ENCODE measurements at regions of chr1 and their contacts with region 1.

Region 1: DNA sequence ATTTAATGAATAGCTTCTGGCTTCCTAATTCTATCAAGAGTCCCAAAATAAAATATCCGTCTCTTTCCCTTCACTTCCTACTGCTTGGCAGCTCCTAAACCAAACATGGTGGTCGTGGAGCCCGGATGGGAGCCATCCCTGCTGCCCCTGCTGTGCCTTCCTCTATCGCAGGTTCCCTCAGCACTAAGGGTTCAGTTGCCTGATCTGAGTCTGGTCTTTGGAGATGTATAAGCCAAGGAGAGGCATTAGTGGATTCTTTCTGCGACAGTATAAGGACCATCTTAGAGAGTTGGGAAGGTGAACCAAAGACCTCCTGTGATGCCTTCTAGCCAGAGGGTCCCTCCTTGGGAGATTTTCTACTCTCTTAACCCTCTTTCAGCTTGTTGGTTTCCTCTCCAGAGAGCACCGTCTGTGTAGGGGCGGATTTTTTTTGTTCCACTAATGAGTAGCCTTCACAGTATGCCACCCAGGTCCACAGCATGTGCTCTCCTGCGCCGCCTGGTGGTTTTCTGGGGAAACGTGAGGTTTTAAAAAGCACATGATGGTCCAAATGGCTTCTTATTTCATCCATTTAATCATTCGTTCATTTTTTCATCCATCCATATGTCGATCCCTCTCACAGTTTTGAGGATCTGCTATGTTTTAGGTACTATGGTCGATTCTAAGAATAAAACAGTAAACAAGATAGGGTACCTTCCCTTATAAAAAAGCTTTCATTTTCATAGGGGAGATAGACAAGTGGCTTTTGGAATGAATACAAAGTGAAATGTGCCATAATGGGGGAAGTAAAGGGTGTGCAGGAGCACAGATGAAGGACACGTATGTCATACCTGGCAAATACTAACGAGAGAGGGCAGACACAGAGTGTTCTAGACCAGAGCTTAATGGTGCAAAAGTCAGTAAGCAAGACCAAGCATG is 71.0 kb downstream of the NFASC start:
- DNase-seq: peak in 2 of 3 donors; percentile 75 to 80
- ATAC-seq: peak; percentile 80
- H3K4me3 ChIP-seq: no peak overlapping the region
- H3K4me1 ChIP-seq: no peaks in the 10 kb centered on the region
- CTCF ChIP-seq: peak; percentile 74

Region 2: DNA sequence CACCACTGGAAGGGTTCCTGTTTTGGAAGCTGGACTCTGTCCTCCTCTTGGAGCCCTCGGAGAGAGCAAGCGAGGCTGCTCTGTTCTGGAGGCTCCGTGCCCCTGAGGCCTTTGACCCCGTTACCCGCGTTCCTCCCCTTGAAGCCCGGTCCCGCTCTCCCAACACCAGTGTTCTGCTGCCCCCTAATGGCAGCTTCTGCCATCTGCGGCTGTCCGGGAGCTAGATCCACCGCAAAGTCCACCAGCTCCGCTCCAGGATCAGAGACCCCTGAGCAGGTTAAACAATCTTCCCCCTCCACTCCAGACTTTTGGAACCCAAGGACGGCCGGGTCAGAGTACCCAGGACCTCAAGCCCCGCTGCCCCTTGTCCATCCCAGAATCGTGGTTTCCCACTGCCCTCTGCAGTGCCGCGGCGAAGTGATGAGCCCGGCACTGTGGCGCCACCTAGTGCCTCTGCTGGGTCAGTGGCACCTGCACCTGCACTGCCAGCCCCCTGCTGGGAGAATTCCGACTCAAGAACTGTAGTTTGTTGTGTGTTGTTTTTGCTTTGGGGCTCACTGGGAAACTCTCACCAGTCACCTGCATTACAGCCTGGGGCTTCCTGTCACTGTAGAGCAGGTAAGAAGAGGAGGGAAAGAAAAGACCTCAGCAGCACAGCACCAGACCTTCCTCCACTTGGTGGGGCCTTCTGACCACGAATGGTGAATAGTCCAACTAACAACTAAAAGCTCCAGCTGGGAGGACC is 134.6 kb before region 1 on chr1:
- intact Hi-C with region 1: loop called (anchors 1 to 5 kb)
- DNase-seq: peak; percentile 80 to 89 (median 87)
- ATAC-seq: peak; percentile 95
- H3K4me3 ChIP-seq: no peak overlapping the region
- H3K4me1 ChIP-seq: peaks cover 10% of the 10 kb centered on the region
- CTCF ChIP-seq: peak; percentile 96

Region 3: GRCh38 chr1:204814181-204814884 is 127.3 kb before region 1 on chr1:
- intact Hi-C with region 1: loop called in 1 of 2 experiments (anchors 5 kb)
- DNase-seq: no peak
- ATAC-seq: no peak
- H3K4me3 ChIP-seq: no peak overlapping the region
- H3K4me1 ChIP-seq: peaks cover 14% of the 10 kb centered on the region
- CTCF ChIP-seq: no peak

Region 4: GRCh38 chr1:205061665-205062069 is 120.0 kb after region 1 on chr1:
- intact Hi-C with region 1: no loop called
- DNase-seq: peak in 2 of 3 donors; percentile 80 to 86
- ATAC-seq: peak; percentile 80
- H3K4me3 ChIP-seq: no peak overlapping the region
- H3K4me1 ChIP-seq: peaks cover 2% of the 10 kb centered on the region
- CTCF ChIP-seq: peak; percentile 74